Right ventricle myocardium superior (tissue), 1 donor: ENCODE measurements at regions of chr3 and their contacts with region 1.

Region 1: GRCh38 chr3:100254168-100254777 is 6.5 kb upstream of the TBC1D23 start:
- DNase-seq: peak; percentile 45
- ATAC-seq: peak; percentile 88

Region 2: GRCh38 chr3:99833617-99834205 is 420.6 kb before region 1 on chr3:
- intact Hi-C with region 1: loop called (anchors 5 kb)
- DNase-seq: no peak
- ATAC-seq: peak; percentile 34

Region 3: GRCh38 chr3:100073899-100074307 is 180.4 kb before region 1 on chr3:
- intact Hi-C with region 1: loop called (anchors 2 kb)
- DNase-seq: peak; percentile 40
- ATAC-seq: peak; percentile 57